CD14-positive monocyte (primary cell): ENCODE measurements at regions of chr17 and their contacts with region 1.

Region 1: GRCh38 chr17:80414803-80415625 is at the start of gene ENDOV:
- DNase-seq: peak; percentile 95 to 97 (median 96)
- H3K4me3 ChIP-seq: peak within 1 kb of the TSS; percentile 70 to 93 (median 87)
- H3K4me3 Mint-ChIP-seq: peak within 1 kb of the TSS; percentile 87 to 91
- H3K27ac ChIP-seq: peak within 1 kb of the TSS; percentile 82 to 92
- H3K27ac Mint-ChIP-seq: peak within 1 kb of the TSS; percentile 88 to 98 (median 97)
- H3K4me1 ChIP-seq: peaks cover 15 to 20% of the 10 kb centered on the region in 2 donors
- H3K4me1 Mint-ChIP-seq: peaks cover 16% of the 10 kb centered on the region
- H3K27me3 ChIP-seq: peaks cover 8 to 31% of the 10 kb centered on the region in 2 donors
- H3K27me3 Mint-ChIP-seq: peaks cover 17 to 34% (median 27%) of the 10 kb centered on the region in 3 donors
- CTCF ChIP-seq: no peak
- polyA plus RNA-seq, gene ENDOV: 10.4 to 15.7 (median 13.3) TPM

Region 2: DNA sequence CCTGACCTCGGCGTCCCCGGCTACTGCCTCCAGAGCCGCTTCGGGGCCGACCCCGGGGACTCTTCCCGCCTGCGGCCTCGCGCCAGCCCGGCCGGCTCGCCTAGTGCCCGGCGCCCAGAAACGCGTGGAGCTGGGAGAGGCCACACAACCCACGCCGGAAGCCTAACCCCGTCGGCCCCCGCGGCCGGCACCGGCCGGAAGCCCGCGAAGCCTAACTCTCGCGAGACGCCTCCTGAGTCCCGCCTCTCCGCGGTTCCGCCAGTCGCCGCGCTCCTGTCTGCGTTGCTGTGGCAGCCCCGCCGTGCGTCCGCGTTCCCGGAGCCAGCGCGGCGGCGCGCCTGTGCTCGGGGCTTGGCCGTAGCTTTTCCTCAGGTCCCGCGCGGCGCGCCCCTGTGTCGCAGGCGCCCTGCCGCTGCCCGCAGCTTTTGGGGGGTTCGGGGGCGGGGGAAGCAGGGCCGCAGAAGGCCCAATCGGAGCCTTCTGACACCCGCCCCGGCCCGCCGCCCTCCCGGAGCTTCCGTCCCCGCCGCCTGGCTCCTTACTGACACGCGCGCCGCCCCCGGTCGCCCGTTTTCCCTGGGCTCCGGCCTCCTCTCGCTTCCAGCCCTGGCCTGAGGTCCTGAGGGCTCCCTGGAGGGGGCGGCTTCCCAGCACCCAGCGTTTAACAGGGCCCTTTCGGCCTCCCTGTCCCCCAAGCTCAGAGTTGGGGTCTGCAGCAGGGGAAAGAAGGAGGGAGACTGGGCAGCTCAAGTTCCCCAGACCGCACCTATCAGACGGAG is 39.7 kb after region 1 on chr17:
- intact Hi-C with region 1: loop called (anchors 2 to 5 kb)
- DNase-seq: peak; percentile 93 to 95 (median 93)
- H3K4me3 ChIP-seq: peak overlapping the region; percentile 45 to 85 (median 61)
- H3K4me3 Mint-ChIP-seq: peak overlapping the region; percentile 86 to 95
- H3K27ac ChIP-seq: peak overlapping the region; percentile 70 to 92
- H3K27ac Mint-ChIP-seq: peak overlapping the region; percentile 89 to 96 (median 94)
- H3K4me1 ChIP-seq: peaks cover 23 to 35% of the 10 kb centered on the region in 2 donors
- H3K4me1 Mint-ChIP-seq: peaks cover 28% of the 10 kb centered on the region
- H3K27me3 ChIP-seq: peaks cover 0 to 2% of the 10 kb centered on the region in 2 donors
- H3K27me3 Mint-ChIP-seq: peaks cover 7 to 24% (median 18%) of the 10 kb centered on the region in 3 donors
- CTCF ChIP-seq: no peak